ENCODE measurements at regions of chr13 and their contacts with region 1.

Region 1: GRCh38 chr13:19863323-19864023 is at the start of gene ZMYM5:
- DNase-seq: peak; percentile 99
- H3K4me3 ChIP-seq: peak within 1 kb of the TSS; percentile 66 to 95 (median 90)
- H3K27ac ChIP-seq: peak within 1 kb of the TSS; percentile 91 to 100 (median 100)
- H3K4me1 ChIP-seq: peaks cover 0 to 27% (median 25%) of the 10 kb centered on the region in 4 donors
- H3K27me3 ChIP-seq: no peaks in the 10 kb centered on the region
- CTCF ChIP-seq: no peak
- EP300 ChIP-seq: no peak
- POLR2A ChIP-seq: peak; percentile 88 to 90
- total RNA-seq, gene ZMYM5: 14.7 to 24.5 (median 17.4) TPM

Region 2: DNA sequence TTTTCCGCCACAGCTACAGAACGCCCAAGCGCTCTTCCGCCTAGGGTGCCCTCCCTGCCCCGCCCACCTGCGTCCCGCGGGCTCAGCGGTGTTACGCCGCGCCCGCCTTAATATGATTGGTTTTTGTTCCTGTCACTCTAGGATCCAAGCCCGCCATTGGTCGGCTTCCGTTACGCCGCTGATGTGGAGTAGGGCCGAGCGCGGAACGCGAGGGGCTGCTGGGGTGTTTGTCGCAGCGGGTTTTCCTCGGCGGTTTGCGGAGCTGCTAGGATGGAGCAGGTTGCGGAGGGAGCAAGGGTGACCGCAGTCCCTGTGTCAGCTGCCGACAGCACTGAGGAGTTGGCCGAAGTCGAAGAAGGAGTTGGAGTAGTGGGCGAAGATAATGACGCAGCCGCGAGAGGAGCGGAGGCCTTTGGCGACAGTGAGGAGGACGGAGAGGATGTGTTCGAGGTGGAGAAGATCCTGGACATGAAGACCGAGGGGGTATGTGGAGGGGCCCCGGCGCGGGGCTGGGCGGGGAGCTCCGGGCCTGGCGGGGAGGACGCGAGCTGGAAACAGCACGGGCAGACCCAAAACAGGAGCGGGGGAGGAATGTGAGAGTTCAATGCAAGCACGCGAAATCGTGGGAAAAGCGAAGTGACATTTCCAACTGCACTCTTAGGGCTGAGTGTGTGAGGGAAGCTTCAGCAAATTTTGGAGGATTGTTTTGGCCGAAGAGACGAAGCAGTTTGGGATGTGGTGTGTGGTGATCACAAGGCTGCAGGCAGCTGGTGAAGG is 229.8 kb before region 1 on chr13 and contains the start of gene MPHOSPH8:
- intact Hi-C with region 1: loop called (anchors 10 kb)
- DNase-seq: peak; percentile 97
- H3K4me3 ChIP-seq: peak within 1 kb of the TSS; percentile 73 to 95 (median 82)
- H3K27ac ChIP-seq: peak within 1 kb of the TSS; percentile 90 to 95 (median 93)
- H3K4me1 ChIP-seq: peaks cover 0 to 40% (median 21%) of the 10 kb centered on the region in 4 donors
- H3K27me3 ChIP-seq: no peaks in the 10 kb centered on the region
- CTCF ChIP-seq: no peak
- EP300 ChIP-seq: no peak
- POLR2A ChIP-seq: peak; percentile 82 to 85
- total RNA-seq, gene MPHOSPH8: 37.4 to 47.6 (median 41.1) TPM

Region 3: GRCh38 chr13:19759671-19760070 is 103.8 kb before region 1 on chr13:
- intact Hi-C with region 1: no loop called
- DNase-seq: no peak
- H3K4me3 ChIP-seq: no peak overlapping the region
- H3K27ac ChIP-seq: no peak overlapping the region
- H3K4me1 ChIP-seq: peaks cover 0 to 17% (median 2%) of the 10 kb centered on the region in 4 donors
- H3K27me3 ChIP-seq: no peaks in the 10 kb centered on the region
- CTCF ChIP-seq: no peak
- EP300 ChIP-seq: no peak
- POLR2A ChIP-seq: no peak

Region 4: DNA sequence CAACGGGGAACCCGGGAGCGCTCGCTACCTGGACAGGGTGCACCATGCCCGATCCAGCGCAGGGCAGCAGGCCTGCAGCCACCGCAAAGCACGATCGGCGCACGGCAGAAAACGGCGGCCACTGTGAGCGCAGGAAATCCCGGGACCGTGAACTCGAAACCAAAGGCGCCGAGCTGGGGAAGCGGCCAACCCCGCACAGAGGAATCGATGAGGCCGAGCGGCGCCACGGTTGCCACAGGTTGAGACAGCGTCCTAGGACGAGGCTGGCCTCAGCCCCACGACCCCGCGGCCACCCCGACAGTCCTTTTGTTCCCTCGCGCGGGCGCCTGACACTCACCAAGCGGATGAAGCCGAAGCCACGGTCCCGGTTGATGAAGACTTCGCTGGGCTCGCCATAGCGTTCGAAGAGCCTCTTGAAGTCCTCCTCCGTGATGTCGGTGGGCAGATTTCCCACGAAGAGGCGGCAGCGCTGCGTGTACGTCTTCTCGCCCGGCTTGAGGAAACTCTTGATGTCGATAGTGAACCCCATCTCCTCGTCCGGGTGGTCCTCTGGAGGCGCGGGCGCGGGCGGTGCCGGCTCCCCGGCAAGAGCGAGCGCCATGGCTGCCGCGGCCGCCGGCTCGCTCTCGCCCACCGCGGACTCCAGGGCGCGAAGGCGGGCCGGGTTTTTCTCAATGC is 81.3 kb before region 1 on chr13:
- intact Hi-C with region 1: loop called (anchors 1 kb)
- DNase-seq: peak; percentile 81
- H3K4me3 ChIP-seq: peak overlapping the region; percentile 76 to 95 (median 85)
- H3K27ac ChIP-seq: peak overlapping the region; percentile 93 to 98 (median 94)
- H3K4me1 ChIP-seq: peaks cover 0 to 17% (median 4%) of the 10 kb centered on the region in 4 donors
- H3K27me3 ChIP-seq: no peaks in the 10 kb centered on the region
- CTCF ChIP-seq: no peak
- EP300 ChIP-seq: no peak
- POLR2A ChIP-seq: no peak

Region 5: DNA sequence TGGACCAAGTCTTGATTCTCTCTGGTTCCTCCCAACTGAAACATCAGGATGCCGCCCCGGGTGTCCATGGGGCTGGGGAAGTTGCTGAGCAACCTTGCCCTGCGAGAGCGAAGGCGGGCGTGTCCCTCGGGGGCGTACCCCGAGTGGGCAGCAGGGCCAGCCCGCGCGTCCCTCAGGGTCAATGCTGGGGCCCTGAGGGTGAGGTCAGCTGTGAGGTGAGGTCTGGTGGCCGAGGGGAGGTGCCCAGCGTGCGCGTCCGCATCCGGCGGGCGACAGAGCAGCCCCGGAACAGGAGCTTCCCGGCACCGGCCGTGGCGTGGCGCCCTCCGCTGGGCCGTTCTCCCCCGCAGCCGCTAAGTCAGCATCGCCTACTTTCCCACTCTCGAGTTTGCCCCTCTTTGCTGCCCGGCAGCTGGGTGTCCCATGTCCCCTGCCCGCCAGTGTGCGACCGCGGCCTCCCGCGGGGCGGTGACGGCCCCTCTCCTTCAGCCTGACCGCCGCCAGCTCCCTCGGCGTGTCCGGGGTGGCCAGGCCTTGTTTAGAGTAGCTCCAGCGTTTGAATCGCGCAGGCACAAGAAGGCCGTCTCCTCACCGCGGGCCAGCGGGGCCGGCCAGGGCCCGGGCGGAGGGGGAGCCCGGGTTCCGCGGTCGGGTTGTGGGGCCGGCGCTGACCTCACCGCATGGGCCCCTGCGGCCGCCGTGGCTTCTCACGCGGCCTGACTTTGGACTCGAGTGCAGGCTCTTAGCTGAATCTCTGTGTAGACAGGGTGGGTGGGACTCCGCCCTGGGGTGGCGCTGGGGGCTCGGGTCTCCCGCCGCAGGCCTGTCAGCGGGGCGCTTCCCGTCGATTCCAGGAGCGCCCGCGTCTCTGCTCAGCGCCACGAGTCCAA is 264.3 kb after region 1 on chr13:
- intact Hi-C with region 1: loop called (anchors 10 kb)
- DNase-seq: peak; percentile 82
- H3K4me3 ChIP-seq: peak overlapping the region; percentile 56 to 68 (median 62)
- H3K27ac ChIP-seq: peak overlapping the region; percentile 85 to 92 (median 89)
- H3K4me1 ChIP-seq: peaks cover 0 to 33% (median 26%) of the 10 kb centered on the region in 4 donors
- H3K27me3 ChIP-seq: peaks cover 0 to 10% (median 0%) of the 10 kb centered on the region in 3 donors
- CTCF ChIP-seq: peak in 3 of 4 experiments; percentile 15 to 47 (median 40)
- EP300 ChIP-seq: no peak
- POLR2A ChIP-seq: no peak

Region 6: GRCh38 chr13:20773194-20774080 is 910.0 kb after region 1 on chr13 and contains the start of gene EEF1AKMT1:
- intact Hi-C with region 1: loop called (anchors 10 kb)
- DNase-seq: peak; percentile 97
- H3K4me3 ChIP-seq: peak within 1 kb of the TSS; percentile 51 to 63 (median 60)
- H3K27ac ChIP-seq: peak within 1 kb of the TSS; percentile 81 to 95 (median 85)
- H3K4me1 ChIP-seq: peaks cover 0 to 15% (median 9%) of the 10 kb centered on the region in 4 donors
- H3K27me3 ChIP-seq: no peaks in the 10 kb centered on the region
- CTCF ChIP-seq: no peak
- EP300 ChIP-seq: no peak
- POLR2A ChIP-seq: peak; percentile 89 to 92
- total RNA-seq, gene EEF1AKMT1: 10.0 to 17.8 (median 12.1) TPM

Measured in sigmoid colon (tissue), 7 donors.